ENCODE measurements at regions of chr10 and their contacts with region 1.

Region 1: DNA sequence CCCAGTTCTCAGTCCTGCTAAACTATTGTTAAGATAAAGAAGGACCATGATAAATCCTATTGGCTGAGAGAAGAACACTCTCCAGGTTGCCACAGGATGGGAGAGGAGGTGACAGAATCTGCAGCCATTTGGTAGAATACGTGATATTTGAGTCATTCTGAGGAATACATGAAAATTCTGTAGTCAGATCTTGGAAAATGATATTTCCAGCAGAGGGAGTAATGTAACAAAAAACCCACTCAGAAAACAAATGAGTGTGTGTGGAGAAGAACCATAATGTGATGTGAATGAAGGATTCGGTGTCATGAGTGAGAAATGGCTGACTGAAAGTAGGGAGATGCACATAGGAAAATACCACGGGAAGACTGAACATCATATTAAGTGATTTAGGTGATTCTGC is 128.5 kb upstream of the PFKP start:
- DNase-seq: peak in 1 of 2 experiments; percentile 31
- ATAC-seq: peak; percentile 71 to 73
- H3K4me3 ChIP-seq: no peak overlapping the region
- H3K27ac ChIP-seq: no peak overlapping the region
- H3K4me1 ChIP-seq: peaks cover 3% of the 10 kb centered on the region; the same call in 2 of the 3 replicates
- CTCF ChIP-seq: peak; percentile 51; the same call in 2 of the 3 replicates
- EP300 ChIP-seq: no peak
- POLR2A ChIP-seq: no peak
- RAD21 ChIP-seq: peak; percentile 51 to 61; a peak in 4 of 5 replicates

Region 2: GRCh38 chr10:2575460-2575859 is 363.4 kb before region 1 on chr10:
- CTCF ChIA-PET with region 1: no interaction called
- POLR2A ChIA-PET with region 1: no interaction called
- DNase-seq: no peak
- ATAC-seq: no peak
- H3K4me3 ChIP-seq: no peak overlapping the region
- H3K27ac ChIP-seq: no peak overlapping the region
- H3K4me1 ChIP-seq: no peaks in the 10 kb centered on the region
- CTCF ChIP-seq: no peak
- EP300 ChIP-seq: no peak
- POLR2A ChIP-seq: no peak
- RAD21 ChIP-seq: no peak

Region 3: DNA sequence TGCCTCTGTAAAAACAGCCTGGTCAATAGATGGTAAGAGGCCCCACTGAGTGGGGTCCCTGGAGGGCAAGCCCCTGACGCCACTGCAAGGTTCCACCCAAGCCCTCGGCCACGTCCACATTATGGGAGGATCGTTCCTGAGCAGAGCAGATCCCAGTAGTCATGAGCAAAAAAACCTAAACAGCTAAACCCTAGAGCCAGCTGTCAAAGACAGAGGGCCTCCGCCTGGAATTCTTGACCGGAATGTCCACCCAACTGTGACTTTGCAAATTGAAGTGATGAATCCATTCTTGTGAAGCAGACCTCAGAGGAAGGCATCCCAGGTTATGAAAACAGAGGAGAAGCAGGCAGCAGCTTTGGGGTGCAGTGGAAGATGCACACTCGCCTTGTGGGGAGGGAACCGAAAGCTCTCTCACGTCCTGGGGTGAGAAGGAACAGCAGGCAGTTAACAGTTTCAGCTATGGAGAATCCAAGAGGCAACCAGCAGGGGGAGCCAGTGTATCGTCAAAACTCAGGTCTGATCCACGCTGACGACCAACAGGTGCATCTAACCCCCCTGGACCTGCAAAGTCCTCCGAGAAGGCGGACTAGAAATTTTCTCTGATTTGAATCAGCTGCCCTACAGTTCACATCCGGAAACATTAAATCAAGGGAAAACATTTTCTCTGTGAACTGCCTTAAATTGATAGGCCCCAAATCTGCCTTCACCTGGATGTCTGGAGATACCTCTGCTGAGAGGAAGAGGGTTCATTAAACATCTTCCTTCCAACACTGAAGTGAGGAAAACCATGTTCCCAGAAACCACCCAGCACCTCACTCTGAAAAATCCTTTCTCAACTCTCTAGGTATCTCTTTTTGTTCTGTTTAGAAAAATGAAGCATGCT is 10.7 kb before region 1 on chr10:
- CTCF ChIA-PET with region 1: interaction called, 22 read pairs
- POLR2A ChIA-PET with region 1: no interaction called
- DNase-seq: peak; percentile 71 to 92
- ATAC-seq: peak; percentile 91 to 95
- H3K4me3 ChIP-seq: no peak overlapping the region
- H3K27ac ChIP-seq: no peak overlapping the region
- H3K4me1 ChIP-seq: peaks cover under 1% of the 10 kb centered on the region; the same call in 2 of the 3 replicates
- CTCF ChIP-seq: peak; percentile 86
- EP300 ChIP-seq: no peak
- POLR2A ChIP-seq: no peak
- RAD21 ChIP-seq: peak; percentile 90 to 93

Region 4: GRCh38 chr10:2949948-2950354 is 11.1 kb after region 1 on chr10:
- CTCF ChIA-PET with region 1: interaction called, 12 read pairs
- POLR2A ChIA-PET with region 1: no interaction called
- DNase-seq: peak; percentile 26 to 27
- ATAC-seq: peak; percentile 82 to 86
- H3K4me3 ChIP-seq: peak overlapping the region; percentile 34
- H3K27ac ChIP-seq: peak overlapping the region in 1 of 2 experiments; percentile 9; a peak in 3 of 6 replicates
- H3K4me1 ChIP-seq: peaks cover 10% of the 10 kb centered on the region
- CTCF ChIP-seq: no peak
- EP300 ChIP-seq: no peak
- POLR2A ChIP-seq: no peak
- RAD21 ChIP-seq: no peak

Region 5: GRCh38 chr10:2994221-2994961 is 55.5 kb after region 1 on chr10:
- CTCF ChIA-PET with region 1: no interaction called
- POLR2A ChIA-PET with region 1: no interaction called
- DNase-seq: no peak
- ATAC-seq: no peak
- H3K4me3 ChIP-seq: no peak overlapping the region
- H3K27ac ChIP-seq: no peak overlapping the region
- H3K4me1 ChIP-seq: peaks cover 11% of the 10 kb centered on the region; the same call in 2 of the 3 replicates
- CTCF ChIP-seq: no peak
- EP300 ChIP-seq: no peak
- POLR2A ChIP-seq: no peak
- RAD21 ChIP-seq: no peak

Region 6: GRCh38 chr10:3025300-3025699 is 86.4 kb after region 1 on chr10:
- CTCF ChIA-PET with region 1: no interaction called
- POLR2A ChIA-PET with region 1: no interaction called
- DNase-seq: no peak
- ATAC-seq: no peak
- H3K4me3 ChIP-seq: no peak overlapping the region
- H3K27ac ChIP-seq: no peak overlapping the region
- H3K4me1 ChIP-seq: no peaks in the 10 kb centered on the region
- CTCF ChIP-seq: no peak
- EP300 ChIP-seq: no peak
- POLR2A ChIP-seq: no peak
- RAD21 ChIP-seq: no peak

Measured in A549 (cell line).